Activated CD4-positive, alpha-beta T cell treated with anti-CD3 and anti-CD28 coated beads for 36 hours (primary cell): ENCODE measurements at regions of chr14 and their contacts with region 1.

Region 1: DNA sequence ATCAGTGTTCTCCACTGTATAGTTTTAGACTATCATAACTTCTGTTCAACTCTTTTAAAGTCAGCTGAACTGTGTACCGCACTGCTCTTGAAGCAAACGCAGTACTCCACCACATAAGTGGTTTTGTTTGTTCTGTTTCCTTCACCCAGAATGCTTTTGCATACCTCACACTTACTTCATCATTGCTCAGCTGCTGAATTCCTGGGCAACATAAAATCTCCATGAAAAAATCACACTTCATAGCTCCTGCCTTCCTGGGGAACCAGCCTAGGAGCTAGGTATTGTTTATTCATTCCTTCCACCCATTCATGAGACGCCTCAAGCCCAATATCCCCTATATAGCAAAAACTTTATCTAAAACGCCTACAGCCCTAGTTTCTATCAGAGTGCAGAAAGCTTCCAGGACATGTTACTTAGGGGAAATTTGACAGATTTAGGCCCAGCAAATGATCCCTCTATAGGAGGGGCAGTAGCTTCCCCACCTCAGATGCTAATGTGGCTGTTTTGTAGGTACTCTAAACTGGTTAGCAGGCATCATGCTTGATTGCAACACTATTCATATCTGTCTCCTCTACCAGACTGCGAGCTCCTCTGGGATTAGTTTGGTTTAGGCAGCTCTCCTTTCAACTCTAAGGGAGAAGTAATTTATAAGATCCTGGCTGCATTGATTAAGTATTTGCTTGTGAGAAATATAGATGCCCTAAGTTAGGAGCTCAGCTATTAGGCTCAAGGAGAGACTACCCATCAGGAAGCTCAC is 44.5 kb downstream of the LRRC9 start:
- DNase-seq: peak; percentile 3
- ATAC-seq: peak; percentile 14
- H3K4me3 Mint-ChIP-seq: peak overlapping the region; percentile 82
- H3K27ac Mint-ChIP-seq: peak overlapping the region; percentile 95
- H3K4me1 Mint-ChIP-seq: peaks cover 19% of the 10 kb centered on the region
- H3K27me3 Mint-ChIP-seq: peaks cover 5% of the 10 kb centered on the region

Region 2: DNA sequence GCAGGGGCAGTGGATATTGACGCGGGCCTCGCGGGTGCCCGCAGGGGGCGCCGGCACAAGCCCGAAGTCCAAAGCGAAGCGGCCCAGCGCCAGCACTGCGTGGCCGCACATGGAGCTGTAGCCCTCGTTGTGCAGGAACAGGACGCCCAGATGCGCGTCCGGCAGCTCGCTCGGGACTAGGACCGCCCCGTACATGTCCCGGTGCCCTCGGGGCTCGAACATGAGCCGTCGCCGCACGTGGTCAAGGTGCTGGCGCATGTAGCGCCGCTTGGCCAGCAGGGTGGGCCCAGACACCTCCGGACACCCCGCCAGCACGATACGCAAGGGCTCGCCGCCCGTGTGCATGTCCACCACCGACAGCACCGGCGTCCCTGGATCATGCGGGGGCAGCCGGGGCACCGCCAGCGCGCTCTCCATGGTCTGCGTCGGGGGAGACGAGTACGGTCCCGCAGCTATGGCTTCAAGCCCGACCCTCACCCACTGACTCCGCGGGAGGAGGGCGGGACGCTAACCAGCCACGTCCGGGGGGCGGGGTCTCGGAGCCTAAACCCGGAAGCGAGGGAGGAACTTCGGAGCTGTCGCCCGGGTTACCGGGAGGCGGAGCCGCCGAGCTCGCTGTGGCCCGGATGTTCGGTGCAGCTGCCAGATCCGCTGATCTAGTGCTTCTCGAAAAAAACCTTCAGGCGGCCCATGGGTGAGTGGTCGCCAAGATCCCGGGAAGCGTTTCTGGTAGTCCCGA is 480.4 kb before region 1 on chr14 and contains the starts of genes JKAMP and L3HYPDH:
- CTCF ChIA-PET with region 1: no interaction called
- POLR2A ChIA-PET with region 1: no interaction called
- intact Hi-C with region 1: loop called in 1 of 2 experiments (anchors 5 kb)
- DNase-seq: peak; percentile 99
- ATAC-seq: peak; percentile 97
- H3K4me3 Mint-ChIP-seq: peak within 1 kb of the TSS; percentile 92
- H3K27ac Mint-ChIP-seq: peak within 1 kb of the TSS; percentile 89
- H3K4me1 Mint-ChIP-seq: peaks cover 57% of the 10 kb centered on the region
- H3K27me3 Mint-ChIP-seq: no peaks in the 10 kb centered on the region
- total RNA-seq, gene JKAMP: 18.0 to 20.2 TPM
- total RNA-seq, gene L3HYPDH: 9.3 to 11.8 TPM

Region 3: GRCh38 chr14:59870277-59871165 is 93.9 kb before region 1 on chr14 and contains the start of gene RTN1:
- CTCF ChIA-PET with region 1: no interaction called
- POLR2A ChIA-PET with region 1: no interaction called
- intact Hi-C with region 1: no loop called
- DNase-seq: peak; percentile 55
- ATAC-seq: peak; percentile 72
- H3K4me3 Mint-ChIP-seq: peak within 1 kb of the TSS; percentile 72
- H3K27ac Mint-ChIP-seq: no peak within 1 kb of the TSS
- H3K4me1 Mint-ChIP-seq: peaks cover 6% of the 10 kb centered on the region
- H3K27me3 Mint-ChIP-seq: peaks cover 41% of the 10 kb centered on the region
- total RNA-seq, gene RTN1: not detected

Region 4: GRCh38 chr14:59918824-59919569 is 45.4 kb before region 1 on chr14:
- CTCF ChIA-PET with region 1: interaction called, 4 read pairs
- POLR2A ChIA-PET with region 1: no interaction called
- intact Hi-C with region 1: loop called in 1 of 2 experiments (anchors 1 kb)
- DNase-seq: peak; percentile 35
- ATAC-seq: peak; percentile 30
- H3K4me3 Mint-ChIP-seq: peak overlapping the region; percentile 58
- H3K27ac Mint-ChIP-seq: no peak overlapping the region
- H3K4me1 Mint-ChIP-seq: peaks cover 6% of the 10 kb centered on the region
- H3K27me3 Mint-ChIP-seq: peaks cover 29% of the 10 kb centered on the region

Region 5: GRCh38 chr14:59983048-59983447 is 18.6 kb after region 1 on chr14:
- CTCF ChIA-PET with region 1: interaction called, 10 read pairs
- POLR2A ChIA-PET with region 1: no interaction called
- intact Hi-C with region 1: no loop called
- DNase-seq: no peak
- ATAC-seq: no peak
- H3K4me3 Mint-ChIP-seq: no peak overlapping the region
- H3K27ac Mint-ChIP-seq: no peak overlapping the region
- H3K4me1 Mint-ChIP-seq: no peaks in the 10 kb centered on the region
- H3K27me3 Mint-ChIP-seq: no peaks in the 10 kb centered on the region

Region 6: GRCh38 chr14:60116181-60116580 is 151.8 kb after region 1 on chr14:
- CTCF ChIA-PET with region 1: no interaction called
- POLR2A ChIA-PET with region 1: no interaction called
- intact Hi-C with region 1: no loop called
- DNase-seq: no peak
- ATAC-seq: no peak
- H3K4me3 Mint-ChIP-seq: no peak overlapping the region
- H3K27ac Mint-ChIP-seq: no peak overlapping the region
- H3K4me1 Mint-ChIP-seq: no peaks in the 10 kb centered on the region
- H3K27me3 Mint-ChIP-seq: no peaks in the 10 kb centered on the region

Region 7: DNA sequence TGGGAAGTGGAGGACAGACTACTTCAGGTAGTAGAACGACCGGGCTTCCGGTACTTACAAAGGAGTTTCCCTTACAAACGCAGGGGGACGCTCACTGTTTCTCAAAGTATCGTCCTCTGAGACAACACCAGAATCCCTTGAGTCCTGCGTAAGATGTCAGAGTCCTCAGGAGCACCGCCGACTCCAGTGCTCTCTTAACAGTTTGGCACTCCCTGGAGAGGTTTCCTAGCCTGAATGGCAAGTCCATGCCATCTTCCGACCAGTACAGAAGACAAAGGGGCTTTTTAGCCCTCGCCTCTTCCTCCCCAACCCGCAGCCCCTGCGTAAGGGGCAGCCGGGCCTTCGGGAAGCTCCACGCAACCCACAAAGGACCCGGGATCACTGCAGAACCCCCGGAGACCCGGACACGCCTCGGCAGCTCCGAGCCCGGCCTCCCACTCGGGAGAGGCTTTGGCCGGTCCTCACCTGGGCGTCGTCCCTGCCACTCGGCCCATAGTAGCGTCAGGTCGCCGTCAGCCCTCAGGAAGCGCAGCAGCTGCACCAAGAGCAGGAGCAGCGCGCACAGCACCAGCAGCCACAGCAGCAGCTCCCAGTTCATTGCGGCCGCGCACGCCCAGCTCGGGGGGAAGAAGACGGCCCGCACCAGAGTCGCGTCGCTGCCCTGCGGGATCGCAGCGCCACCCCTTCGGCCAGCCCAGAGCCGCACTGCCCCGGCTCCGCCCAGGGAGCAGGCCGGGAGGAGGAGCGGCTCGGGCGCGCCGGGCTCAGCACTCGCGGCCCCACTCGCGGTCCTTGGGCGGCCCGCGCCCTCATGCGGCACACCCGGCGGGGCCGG is 200.5 kb after region 1 on chr14 and contains the start of gene DHRS7:
- CTCF ChIA-PET with region 1: interaction called, 7 read pairs
- POLR2A ChIA-PET with region 1: no interaction called
- intact Hi-C with region 1: loop called in 1 of 2 experiments (anchors 1 kb)
- DNase-seq: peak; percentile 79
- ATAC-seq: peak; percentile 88
- H3K4me3 Mint-ChIP-seq: peak within 1 kb of the TSS; percentile 99
- H3K27ac Mint-ChIP-seq: peak within 1 kb of the TSS; percentile 99
- H3K4me1 Mint-ChIP-seq: peaks cover 41% of the 10 kb centered on the region
- H3K27me3 Mint-ChIP-seq: no peaks in the 10 kb centered on the region
- total RNA-seq, gene DHRS7: 27.9 to 46.3 TPM

Region 8: DNA sequence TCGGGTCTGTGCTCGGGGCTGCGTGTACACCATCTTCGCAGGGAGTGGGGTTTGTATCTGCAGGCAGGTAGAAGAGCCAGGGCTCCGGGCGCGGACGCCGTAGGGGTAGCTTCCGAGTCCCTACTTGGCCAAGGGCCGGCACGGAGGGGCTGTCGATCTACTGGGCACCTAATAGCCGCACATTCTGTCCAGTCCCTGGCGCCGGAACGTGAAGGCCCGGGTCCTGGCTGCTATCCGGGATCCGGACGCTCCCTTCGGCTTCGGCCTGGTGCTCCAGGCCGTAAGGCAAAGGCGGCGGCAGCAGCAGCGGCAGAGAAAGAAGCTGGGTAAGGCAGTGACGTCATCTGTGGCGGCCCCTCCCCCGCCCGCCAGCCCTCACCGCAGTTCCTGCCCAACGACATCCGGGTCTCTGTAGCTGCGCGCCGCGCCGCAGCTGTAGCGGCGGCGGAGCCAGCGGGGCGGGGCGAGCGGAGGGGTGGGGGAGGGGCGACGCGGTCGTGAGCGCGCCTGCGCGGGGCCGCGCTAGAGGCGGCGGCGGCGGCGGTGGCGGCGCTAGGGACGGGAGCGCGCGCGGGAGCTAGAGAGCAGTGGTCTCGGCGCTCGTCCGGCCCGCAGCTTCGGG is 284.4 kb after region 1 on chr14 and contains the start of gene PPM1A:
- CTCF ChIA-PET with region 1: interaction called, 4 read pairs
- POLR2A ChIA-PET with region 1: interaction called, 5 read pairs
- intact Hi-C with region 1: loop called (anchors 1 to 2 kb)
- DNase-seq: peak; percentile 97
- ATAC-seq: peak; percentile 73
- H3K4me3 Mint-ChIP-seq: peak within 1 kb of the TSS; percentile 94
- H3K27ac Mint-ChIP-seq: peak within 1 kb of the TSS; percentile 100
- H3K4me1 Mint-ChIP-seq: peaks cover 50% of the 10 kb centered on the region
- H3K27me3 Mint-ChIP-seq: no peaks in the 10 kb centered on the region
- total RNA-seq, gene PPM1A: 30.4 to 41.5 TPM

Region 9: DNA sequence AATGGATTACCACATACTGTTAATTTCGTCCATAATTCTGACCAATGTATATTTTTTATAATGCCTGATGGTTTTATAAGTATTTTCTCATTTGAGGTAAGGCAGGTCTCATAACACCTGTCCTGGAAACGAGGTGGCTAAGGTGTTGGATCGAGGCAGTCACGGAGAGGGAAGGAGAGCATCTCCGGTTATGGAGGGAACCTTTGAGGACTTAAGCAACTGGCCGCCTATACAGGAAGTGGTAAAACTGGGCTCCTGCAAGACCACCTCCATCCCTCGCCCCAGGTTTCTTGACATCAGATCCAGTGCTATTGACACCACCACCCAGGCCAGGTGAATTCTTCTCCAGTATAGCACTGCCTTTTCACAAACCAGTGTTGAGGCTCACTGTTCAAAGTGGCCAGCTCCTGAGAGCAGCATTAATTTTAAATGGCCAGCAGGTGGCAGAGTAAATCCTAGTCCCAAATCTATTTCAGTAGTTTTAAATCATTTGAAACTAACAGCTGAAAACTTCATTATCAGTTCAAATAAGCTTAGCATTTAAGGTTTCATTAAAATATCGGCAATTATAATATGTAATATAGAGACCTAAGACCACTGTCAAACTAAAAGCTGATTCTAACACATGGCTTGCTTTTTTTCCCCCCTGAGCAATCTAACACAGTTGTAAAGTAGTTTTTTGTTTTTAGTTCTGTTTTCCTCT is 385.4 kb after region 1 on chr14:
- CTCF ChIA-PET with region 1: no interaction called
- POLR2A ChIA-PET with region 1: no interaction called
- intact Hi-C with region 1: no loop called
- DNase-seq: peak; percentile 40
- ATAC-seq: peak; percentile 39
- H3K4me3 Mint-ChIP-seq: no peak overlapping the region
- H3K27ac Mint-ChIP-seq: no peak overlapping the region
- H3K4me1 Mint-ChIP-seq: no peaks in the 10 kb centered on the region
- H3K27me3 Mint-ChIP-seq: no peaks in the 10 kb centered on the region